Activated CD4-positive, alpha-beta memory T cell treated with anti-CD3 and anti-CD28 coated beads for 36 hours (primary cell): ENCODE measurements at regions of chr9 and their contacts with region 1.

Region 1: DNA sequence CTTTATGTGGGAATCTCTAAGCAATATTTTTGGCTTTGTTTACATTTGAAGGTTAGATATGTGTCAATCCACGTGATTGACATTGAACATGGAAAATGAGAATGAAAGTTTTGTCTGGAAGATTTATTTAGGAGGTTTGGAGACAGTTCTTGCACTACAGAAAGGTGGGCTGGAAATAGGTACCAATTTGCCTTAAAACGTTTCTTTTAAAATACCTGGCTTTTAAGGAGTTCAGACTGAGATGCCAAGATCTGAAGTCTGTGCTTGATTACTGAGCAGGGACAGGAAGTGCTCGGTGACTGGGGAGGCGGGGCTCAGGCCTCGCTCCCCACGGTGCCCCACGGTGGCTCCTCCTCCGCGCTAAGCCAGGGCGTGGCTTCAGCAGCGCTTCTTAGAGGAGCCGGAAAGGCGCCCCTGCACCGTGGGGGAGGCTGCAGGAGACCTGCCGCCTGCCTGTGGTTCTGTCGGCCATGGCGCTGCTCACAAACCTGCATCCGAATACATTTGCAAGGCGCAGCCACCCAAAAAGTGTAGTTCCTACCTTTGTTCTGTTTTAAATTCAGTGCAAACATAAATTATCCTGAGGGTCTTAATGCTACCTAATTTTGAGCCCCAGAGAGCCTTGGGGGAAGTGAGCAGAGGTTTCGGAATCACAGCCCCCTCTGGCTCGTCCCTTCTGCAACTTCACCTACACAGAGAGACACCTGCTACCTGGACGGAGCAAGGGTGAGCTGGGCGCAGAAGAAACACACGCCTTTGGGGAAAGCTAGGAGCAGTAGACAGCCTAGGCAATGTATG is 49.2 kb downstream of the USP20 start:
- DNase-seq: peak; percentile 98
- H3K4me3 Mint-ChIP-seq: peak overlapping the region; percentile 93
- H3K27ac Mint-ChIP-seq: peak overlapping the region; percentile 97
- H3K4me1 Mint-ChIP-seq: peaks cover 41% of the 10 kb centered on the region
- H3K27me3 Mint-ChIP-seq: no peaks in the 10 kb centered on the region

Region 2: GRCh38 chr9:129868916-129869486 is 15.4 kb before region 1 on chr9:
- CTCF ChIA-PET with region 1: interaction called, 7 read pairs
- POLR2A ChIA-PET with region 1: interaction called, 23 read pairs
- intact Hi-C with region 1: loop called (anchors 1 kb)
- DNase-seq: peak; percentile 95
- H3K4me3 Mint-ChIP-seq: peak overlapping the region; percentile 67
- H3K27ac Mint-ChIP-seq: peak overlapping the region; percentile 90
- H3K4me1 Mint-ChIP-seq: peaks cover 71% of the 10 kb centered on the region
- H3K27me3 Mint-ChIP-seq: no peaks in the 10 kb centered on the region

Region 3: DNA sequence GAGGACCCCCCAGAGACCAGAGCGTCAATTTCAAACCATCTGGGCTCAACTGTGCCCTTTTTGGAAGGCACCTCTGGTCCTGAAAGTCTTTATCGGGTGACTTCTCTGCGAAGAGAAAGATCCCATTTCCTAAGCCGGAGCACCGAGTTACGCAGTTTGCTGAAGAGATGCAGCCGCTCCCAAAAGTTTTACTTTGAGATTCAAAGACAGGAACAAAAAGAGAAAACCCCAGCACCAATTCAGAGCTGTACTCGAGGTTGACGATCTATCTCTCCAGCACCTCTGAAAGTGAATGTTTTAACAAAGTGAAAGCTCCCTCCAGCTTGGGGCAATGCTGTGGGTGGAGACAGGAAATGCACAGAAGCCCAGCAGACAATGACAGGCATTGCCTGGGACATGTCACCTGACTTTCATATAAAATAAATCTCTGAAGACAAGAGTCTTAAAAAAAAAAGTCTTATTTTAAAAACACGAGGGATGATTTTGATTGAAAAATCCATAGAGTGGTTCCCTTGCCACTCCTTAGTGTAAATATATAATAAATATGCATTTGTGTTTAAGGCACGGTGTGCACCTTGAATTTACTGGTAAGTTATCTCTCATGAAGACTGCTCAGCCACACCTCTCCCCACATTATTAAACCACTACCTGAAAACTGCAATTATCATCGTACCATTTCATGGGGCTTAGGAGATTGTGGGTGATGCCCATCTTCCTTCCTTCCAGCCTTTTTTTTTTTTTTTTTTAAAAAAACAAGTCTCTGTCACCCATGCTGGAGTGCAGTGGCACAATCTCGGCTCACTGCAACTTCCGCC is 78.7 kb after region 1 on chr9:
- CTCF ChIA-PET with region 1: interaction called, 8 read pairs
- POLR2A ChIA-PET with region 1: interaction called, 3 read pairs
- intact Hi-C with region 1: loop called (anchors 1 kb)
- DNase-seq: peak; percentile 86
- H3K4me3 Mint-ChIP-seq: peak overlapping the region; percentile 77
- H3K27ac Mint-ChIP-seq: peak overlapping the region; percentile 92
- H3K4me1 Mint-ChIP-seq: peaks cover 76% of the 10 kb centered on the region
- H3K27me3 Mint-ChIP-seq: no peaks in the 10 kb centered on the region

Region 4: GRCh38 chr9:130034570-130034969 is 150.2 kb after region 1 on chr9:
- CTCF ChIA-PET with region 1: interaction called, 15 read pairs
- POLR2A ChIA-PET with region 1: interaction called, 76 read pairs
- intact Hi-C with region 1: loop called (anchors 1 kb)
- DNase-seq: peak; percentile 54
- H3K4me3 Mint-ChIP-seq: peak overlapping the region; percentile 49
- H3K27ac Mint-ChIP-seq: peak overlapping the region; percentile 96
- H3K4me1 Mint-ChIP-seq: peaks cover 81% of the 10 kb centered on the region
- H3K27me3 Mint-ChIP-seq: no peaks in the 10 kb centered on the region

Region 5: DNA sequence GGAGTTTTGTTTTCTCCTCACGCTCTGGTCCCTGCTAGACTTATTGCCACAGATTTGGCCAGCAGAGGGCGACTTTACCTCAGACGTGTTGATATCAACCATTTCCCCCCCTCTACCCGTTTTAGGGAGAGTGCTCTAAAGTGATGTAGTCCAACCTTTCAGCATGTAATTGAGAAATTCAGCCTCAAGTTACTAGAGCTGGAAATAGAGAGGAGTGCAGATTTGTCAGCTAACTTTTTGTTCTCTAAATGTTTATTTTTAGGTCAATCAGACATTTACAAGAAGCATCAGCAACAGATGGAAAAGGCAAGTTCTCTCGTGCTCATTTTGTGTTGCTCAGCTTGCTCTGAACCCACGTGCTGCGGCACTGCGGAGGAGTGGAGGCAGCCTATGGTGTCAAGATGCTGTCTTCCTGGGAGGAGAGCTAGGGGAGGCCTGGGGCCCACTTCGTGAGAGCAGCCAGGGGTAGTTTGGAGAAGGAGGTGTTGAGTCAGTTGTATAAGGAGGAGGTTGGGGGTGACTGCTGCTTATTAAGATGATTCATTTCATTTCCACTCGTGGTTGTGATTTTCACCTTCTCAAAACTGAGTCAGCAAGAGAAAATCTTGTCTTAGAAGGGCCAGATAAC is 222.9 kb after region 1 on chr9:
- CTCF ChIA-PET with region 1: interaction called, 9 read pairs
- POLR2A ChIA-PET with region 1: no interaction called
- intact Hi-C with region 1: loop called (anchors 2 kb)
- DNase-seq: peak; percentile 89
- H3K4me3 Mint-ChIP-seq: no peak overlapping the region
- H3K27ac Mint-ChIP-seq: peak overlapping the region; percentile 82
- H3K4me1 Mint-ChIP-seq: peaks cover 41% of the 10 kb centered on the region
- H3K27me3 Mint-ChIP-seq: no peaks in the 10 kb centered on the region